Calu3 (cell line): ENCODE measurements at regions of chr10 and their contacts with region 1.

Region 1: DNA sequence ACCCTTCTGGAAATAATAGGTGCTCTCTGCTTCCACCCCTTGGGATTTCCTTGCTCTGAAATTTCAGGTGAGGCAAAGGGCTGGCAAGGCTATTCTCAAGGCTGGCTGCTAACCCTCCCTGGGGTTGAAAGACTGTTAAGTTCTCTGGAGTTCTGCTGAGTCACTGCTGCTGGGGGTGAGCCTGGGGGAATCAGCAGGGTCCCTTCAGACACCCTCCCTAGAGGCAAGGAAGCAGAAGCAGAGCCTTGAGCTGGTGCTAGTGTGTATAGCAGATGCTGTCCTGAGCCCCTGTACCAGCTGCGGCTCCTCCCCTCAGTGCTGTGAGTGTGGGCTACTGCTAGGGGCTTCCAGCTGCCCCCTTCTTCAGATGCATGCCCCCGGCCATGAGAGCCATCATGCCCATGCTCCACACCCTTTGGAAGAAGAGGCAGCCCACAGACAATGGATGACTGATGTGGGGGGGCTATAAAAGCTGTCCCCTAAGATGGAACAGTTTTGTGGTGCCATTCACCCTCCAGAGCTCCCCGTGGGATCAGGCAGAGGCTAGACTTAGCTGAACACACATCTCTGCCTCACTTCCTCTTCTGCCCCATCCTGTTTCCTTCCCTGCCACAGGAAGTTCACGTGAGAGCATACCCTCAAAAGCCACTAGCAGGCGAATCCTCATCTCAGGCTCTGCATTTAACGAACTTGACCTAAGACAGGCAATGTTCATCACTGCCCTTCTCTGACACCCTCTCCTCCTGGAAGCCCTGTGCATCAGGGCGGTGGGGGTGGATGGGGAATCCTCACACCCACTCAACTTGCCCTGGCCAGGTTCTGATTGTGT is 91.8 kb downstream of the SH3PXD2A start:
- DNase-seq: no peak
- H3K4me3 Mint-ChIP-seq: no peak overlapping the region
- H3K27ac Mint-ChIP-seq: no peak overlapping the region
- H3K4me1 Mint-ChIP-seq: peaks cover 29% of the 10 kb centered on the region
- H3K27me3 Mint-ChIP-seq: peaks cover 25% of the 10 kb centered on the region
- CTCF ChIP-seq: no peak

Region 2: DNA sequence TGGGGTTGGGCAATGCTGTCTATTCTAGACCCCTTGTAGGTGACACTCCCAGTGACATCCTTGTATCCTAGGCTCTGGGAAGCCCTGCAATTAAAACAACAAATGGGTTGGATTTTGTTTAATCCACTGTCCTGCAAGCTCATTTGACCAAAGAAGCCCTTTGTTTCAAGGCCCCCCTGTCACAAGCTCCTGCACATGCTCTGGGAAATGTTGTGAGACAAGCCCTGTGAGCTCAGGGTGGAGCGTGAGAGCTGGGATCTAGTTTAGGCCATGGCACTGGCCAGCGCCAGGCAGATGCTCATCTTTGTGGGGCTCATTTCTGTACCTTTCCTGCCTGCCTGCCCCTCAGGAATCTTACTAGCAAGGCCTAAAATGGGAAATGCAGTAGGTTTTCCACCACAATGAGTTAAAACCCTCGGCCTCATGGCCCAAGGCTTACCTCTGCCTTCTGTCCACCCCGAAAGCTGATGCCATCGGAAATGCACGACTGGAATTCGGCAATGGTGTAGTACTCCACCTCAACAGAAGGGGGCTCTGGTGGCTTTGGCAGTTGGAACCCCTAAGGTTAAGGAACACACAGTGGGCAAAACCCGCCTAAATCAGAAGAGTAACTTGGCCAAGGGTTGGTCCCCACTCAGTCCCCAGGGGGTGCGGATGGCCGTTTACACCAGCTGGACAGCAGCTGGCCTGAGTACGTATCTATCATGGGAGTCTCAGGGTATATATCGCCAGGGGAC is 158.1 kb before region 1 on chr10:
- CTCF ChIA-PET with region 1: no interaction called
- intact Hi-C with region 1: no loop called
- DNase-seq: peak; percentile 28
- H3K4me3 Mint-ChIP-seq: no peak overlapping the region
- H3K27ac Mint-ChIP-seq: no peak overlapping the region
- H3K4me1 Mint-ChIP-seq: no peaks in the 10 kb centered on the region
- H3K27me3 Mint-ChIP-seq: no peaks in the 10 kb centered on the region
- CTCF ChIP-seq: peak; percentile 56

Region 3: GRCh38 chr10:103712570-103713498 is 50.8 kb before region 1 on chr10:
- CTCF ChIA-PET with region 1: no interaction called
- intact Hi-C with region 1: loop called (anchors 2 kb)
- DNase-seq: peak; percentile 80
- H3K4me3 Mint-ChIP-seq: no peak overlapping the region
- H3K27ac Mint-ChIP-seq: no peak overlapping the region
- H3K4me1 Mint-ChIP-seq: peaks cover 25% of the 10 kb centered on the region
- H3K27me3 Mint-ChIP-seq: peaks cover 7% of the 10 kb centered on the region
- CTCF ChIP-seq: peak; percentile 81